HCT116 (cell line): ENCODE measurements at regions of chr9 and their contacts with region 1.

Region 1: GRCh38 chr9:115883457-115884329 is 269.9 kb upstream of the PAPPA start:
- DNase-seq: peak; percentile 12
- ATAC-seq: peak; percentile 95
- H3K4me3 ChIP-seq: no peak overlapping the region
- H3K27ac ChIP-seq: no peak overlapping the region
- H3K4me1 ChIP-seq: no peaks in the 10 kb centered on the region
- H3K27me3 ChIP-seq: peaks cover 52% of the 10 kb centered on the region
- CTCF ChIP-seq: peak; percentile 69 to 74 (median 73)
- POLR2A ChIP-seq: no peak
- RAD21 ChIP-seq: peak; percentile 83

Region 2: GRCh38 chr9:116112236-116112635 is 228.5 kb after region 1 on chr9:
- CTCF ChIA-PET with region 1: interaction called, 4 read pairs
- POLR2A ChIA-PET with region 1: no interaction called
- RAD21 ChIA-PET with region 1: no interaction called
- intact Hi-C with region 1: loop called (anchors 1 kb)
- DNase-seq: no peak
- ATAC-seq: no peak; the same call in 1 of the 2 replicates
- H3K4me3 ChIP-seq: no peak overlapping the region
- H3K27ac ChIP-seq: no peak overlapping the region
- H3K4me1 ChIP-seq: no peaks in the 10 kb centered on the region
- H3K27me3 ChIP-seq: peaks cover 9% of the 10 kb centered on the region
- CTCF ChIP-seq: peak; percentile 34 to 52 (median 41); a peak in 4 of 6 replicates
- POLR2A ChIP-seq: no peak
- RAD21 ChIP-seq: peak; percentile 53

Region 3: GRCh38 chr9:116149844-116150243 is 266.2 kb after region 1 on chr9:
- CTCF ChIA-PET with region 1: interaction called, 3 read pairs
- POLR2A ChIA-PET with region 1: no interaction called
- RAD21 ChIA-PET with region 1: no interaction called
- intact Hi-C with region 1: loop called (anchors 2 kb)
- DNase-seq: peak; percentile 22
- ATAC-seq: peak; percentile 77
- H3K4me3 ChIP-seq: no peak overlapping the region
- H3K27ac ChIP-seq: no peak overlapping the region
- H3K4me1 ChIP-seq: no peaks in the 10 kb centered on the region
- H3K27me3 ChIP-seq: peaks cover 11% of the 10 kb centered on the region; the same call in 1 of the 2 replicates
- CTCF ChIP-seq: peak; percentile 49 to 81 (median 75); a peak in 5 of 6 replicates
- POLR2A ChIP-seq: no peak
- RAD21 ChIP-seq: peak; percentile 51; the same call in 1 of the 2 replicates

Region 4: GRCh38 chr9:116494815-116495634 is 611.3 kb after region 1 on chr9:
- CTCF ChIA-PET with region 1: no interaction called
- POLR2A ChIA-PET with region 1: no interaction called
- RAD21 ChIA-PET with region 1: no interaction called
- intact Hi-C with region 1: loop called (anchors 5 kb)
- DNase-seq: peak; percentile 35
- ATAC-seq: peak; percentile 83
- H3K4me3 ChIP-seq: no peak overlapping the region
- H3K27ac ChIP-seq: no peak overlapping the region
- H3K4me1 ChIP-seq: peaks cover 7 to 29% of the 10 kb centered on the region in 2 experiments; a peak in 3 of 4 replicates
- H3K27me3 ChIP-seq: no peaks in the 10 kb centered on the region
- CTCF ChIP-seq: peak; percentile 50 to 88 (median 86)
- POLR2A ChIP-seq: no peak
- RAD21 ChIP-seq: peak; percentile 64